ENCODE measurements at regions of chr1 and their contacts with region 1.

Region 1: DNA sequence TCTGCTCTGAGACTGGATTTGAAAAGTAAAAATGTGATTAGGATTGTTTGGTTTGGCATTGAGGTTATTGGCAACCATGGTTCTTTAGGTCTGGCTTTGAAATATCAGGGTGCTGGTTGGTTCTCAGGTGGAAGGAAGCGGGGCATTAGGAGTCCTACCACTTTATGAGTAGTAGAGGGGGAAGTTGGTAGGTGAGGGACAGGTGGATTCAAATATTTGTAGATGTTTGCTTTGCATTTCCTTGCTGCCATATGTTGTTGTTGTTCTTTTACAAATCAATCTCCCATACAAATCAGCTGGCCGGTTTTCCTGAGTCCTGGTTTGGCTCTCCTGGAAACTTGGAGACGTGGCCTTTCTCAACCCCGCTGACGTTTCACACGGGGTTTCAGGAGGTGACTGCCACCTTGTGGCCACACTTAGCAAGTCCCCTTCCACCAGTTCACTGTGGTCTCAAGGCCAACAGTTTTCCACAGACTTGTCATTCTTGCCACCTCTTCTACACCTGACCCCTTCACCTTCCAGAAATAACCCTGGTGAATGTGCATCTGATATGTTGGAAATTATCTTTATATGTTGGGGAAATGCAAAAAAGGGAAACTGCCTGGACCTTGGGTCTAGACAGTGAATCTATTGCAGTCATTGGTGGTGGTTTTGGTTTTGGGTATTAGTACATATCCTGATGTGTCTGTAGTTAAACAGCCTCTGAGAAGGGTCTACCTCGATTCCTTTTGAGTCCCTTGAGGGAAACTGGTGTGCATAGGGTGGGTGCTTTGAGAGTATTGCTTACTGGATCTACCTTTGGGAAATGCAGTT is 127.0 kb upstream of the KIAA0040 start:
- DNase-seq: peak; percentile 76
- H3K4me3 Mint-ChIP-seq: no peak overlapping the region
- H3K27ac Mint-ChIP-seq: no peak overlapping the region
- H3K4me1 Mint-ChIP-seq: peaks cover 14% of the 10 kb centered on the region
- H3K27me3 Mint-ChIP-seq: no peaks in the 10 kb centered on the region

Region 2: GRCh38 chr1:174700775-174701174 is 618.8 kb before region 1 on chr1:
- CTCF ChIA-PET with region 1: no interaction called
- POLR2A ChIA-PET with region 1: no interaction called
- intact Hi-C with region 1: no loop called
- DNase-seq: no peak
- H3K4me3 Mint-ChIP-seq: no peak overlapping the region
- H3K27ac Mint-ChIP-seq: no peak overlapping the region
- H3K4me1 Mint-ChIP-seq: no peaks in the 10 kb centered on the region
- H3K27me3 Mint-ChIP-seq: no peaks in the 10 kb centered on the region

Region 3: GRCh38 chr1:175162955-175163354 is 156.7 kb before region 1 on chr1:
- CTCF ChIA-PET with region 1: interaction called, 270 read pairs
- POLR2A ChIA-PET with region 1: no interaction called
- intact Hi-C with region 1: no loop called
- DNase-seq: no peak
- H3K4me3 Mint-ChIP-seq: no peak overlapping the region
- H3K27ac Mint-ChIP-seq: no peak overlapping the region
- H3K4me1 Mint-ChIP-seq: peaks cover 6% of the 10 kb centered on the region
- H3K27me3 Mint-ChIP-seq: no peaks in the 10 kb centered on the region

Region 4: DNA sequence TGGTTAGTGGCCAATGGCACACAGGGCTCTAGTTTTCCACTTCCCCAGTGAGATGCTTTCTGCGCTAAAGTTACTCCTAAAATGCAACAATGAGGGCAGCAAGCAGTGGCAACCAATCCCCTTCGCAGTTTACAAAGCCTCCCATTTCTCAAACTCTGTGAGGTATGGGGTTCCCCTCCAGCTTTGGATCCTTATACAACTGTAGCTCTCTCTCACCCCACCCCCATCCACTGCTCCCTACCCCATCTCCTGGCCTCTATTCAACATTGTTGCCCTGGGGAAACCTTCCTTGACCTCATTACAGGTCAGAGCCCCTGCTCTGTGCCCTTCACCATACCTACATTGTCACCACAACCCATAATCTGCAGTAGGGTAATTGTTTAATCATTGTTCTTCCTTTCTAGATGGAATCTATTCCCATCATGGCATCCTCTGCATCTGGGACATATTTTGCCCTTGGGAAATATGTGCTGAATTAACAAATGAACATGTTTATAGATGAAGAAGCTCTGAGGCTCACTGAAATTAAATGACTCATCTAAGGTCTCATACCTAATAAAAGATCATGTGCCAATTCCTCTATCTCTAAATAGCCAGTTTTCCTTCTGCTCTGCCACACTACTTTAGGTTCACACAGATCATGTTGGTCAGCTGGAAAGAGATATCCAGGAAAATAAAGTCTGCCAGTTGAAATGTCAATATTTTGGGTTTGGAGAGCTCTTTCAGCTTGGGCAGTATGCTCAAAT is 139.6 kb before region 1 on chr1:
- CTCF ChIA-PET with region 1: interaction called, 11 read pairs
- POLR2A ChIA-PET with region 1: no interaction called
- intact Hi-C with region 1: no loop called
- DNase-seq: no peak
- H3K4me3 Mint-ChIP-seq: no peak overlapping the region
- H3K27ac Mint-ChIP-seq: no peak overlapping the region
- H3K4me1 Mint-ChIP-seq: peaks cover 63% of the 10 kb centered on the region
- H3K27me3 Mint-ChIP-seq: no peaks in the 10 kb centered on the region

Region 5: GRCh38 chr1:175338387-175339135 is 18.9 kb after region 1 on chr1:
- CTCF ChIA-PET with region 1: interaction called, 17 read pairs
- POLR2A ChIA-PET with region 1: no interaction called
- intact Hi-C with region 1: no loop called
- DNase-seq: peak; percentile 73
- H3K4me3 Mint-ChIP-seq: no peak overlapping the region
- H3K27ac Mint-ChIP-seq: no peak overlapping the region
- H3K4me1 Mint-ChIP-seq: no peaks in the 10 kb centered on the region
- H3K27me3 Mint-ChIP-seq: no peaks in the 10 kb centered on the region

Region 6: GRCh38 chr1:175514387-175514953 is 194.8 kb after region 1 on chr1:
- CTCF ChIA-PET with region 1: no interaction called
- POLR2A ChIA-PET with region 1: no interaction called
- intact Hi-C with region 1: no loop called
- DNase-seq: peak; percentile 39
- H3K4me3 Mint-ChIP-seq: no peak overlapping the region
- H3K27ac Mint-ChIP-seq: no peak overlapping the region
- H3K4me1 Mint-ChIP-seq: no peaks in the 10 kb centered on the region
- H3K27me3 Mint-ChIP-seq: peaks cover 28% of the 10 kb centered on the region